ENCODE measurements at regions of chr19 and their contacts with region 1.

Region 1: GRCh38 chr19:1011831-1012333 is 9.0 kb downstream of the TMEM259 start:
- DNase-seq: no peak
- ATAC-seq: no peak
- H3K4me3 Mint-ChIP-seq: no peak overlapping the region
- H3K27ac Mint-ChIP-seq: no peak overlapping the region
- H3K4me1 Mint-ChIP-seq: peaks cover 12% of the 10 kb centered on the region
- H3K27me3 Mint-ChIP-seq: no peaks in the 10 kb centered on the region
- CTCF ChIP-seq: no peak

Region 2: GRCh38 chr19:996051-996838 is 15.6 kb before region 1 on chr19:
- CTCF ChIA-PET with region 1: interaction called, 3 read pairs
- POLR2A ChIA-PET with region 1: interaction called, 11 read pairs
- intact Hi-C with region 1: no loop called
- DNase-seq: peak; percentile 86
- ATAC-seq: peak; percentile 38
- H3K4me3 Mint-ChIP-seq: peak overlapping the region; percentile 16
- H3K27ac Mint-ChIP-seq: no peak overlapping the region
- H3K4me1 Mint-ChIP-seq: peaks cover 9% of the 10 kb centered on the region
- H3K27me3 Mint-ChIP-seq: peaks cover 20% of the 10 kb centered on the region
- CTCF ChIP-seq: no peak